ENCODE measurements at regions of chr16 and their contacts with region 1.

Region 1: GRCh38 chr16:53232826-53233529 is 178.2 kb downstream of the CHD9 start:
- DNase-seq: no peak
- H3K4me3 ChIP-seq: no peak overlapping the region
- CTCF ChIP-seq: no peak

Region 2: DNA sequence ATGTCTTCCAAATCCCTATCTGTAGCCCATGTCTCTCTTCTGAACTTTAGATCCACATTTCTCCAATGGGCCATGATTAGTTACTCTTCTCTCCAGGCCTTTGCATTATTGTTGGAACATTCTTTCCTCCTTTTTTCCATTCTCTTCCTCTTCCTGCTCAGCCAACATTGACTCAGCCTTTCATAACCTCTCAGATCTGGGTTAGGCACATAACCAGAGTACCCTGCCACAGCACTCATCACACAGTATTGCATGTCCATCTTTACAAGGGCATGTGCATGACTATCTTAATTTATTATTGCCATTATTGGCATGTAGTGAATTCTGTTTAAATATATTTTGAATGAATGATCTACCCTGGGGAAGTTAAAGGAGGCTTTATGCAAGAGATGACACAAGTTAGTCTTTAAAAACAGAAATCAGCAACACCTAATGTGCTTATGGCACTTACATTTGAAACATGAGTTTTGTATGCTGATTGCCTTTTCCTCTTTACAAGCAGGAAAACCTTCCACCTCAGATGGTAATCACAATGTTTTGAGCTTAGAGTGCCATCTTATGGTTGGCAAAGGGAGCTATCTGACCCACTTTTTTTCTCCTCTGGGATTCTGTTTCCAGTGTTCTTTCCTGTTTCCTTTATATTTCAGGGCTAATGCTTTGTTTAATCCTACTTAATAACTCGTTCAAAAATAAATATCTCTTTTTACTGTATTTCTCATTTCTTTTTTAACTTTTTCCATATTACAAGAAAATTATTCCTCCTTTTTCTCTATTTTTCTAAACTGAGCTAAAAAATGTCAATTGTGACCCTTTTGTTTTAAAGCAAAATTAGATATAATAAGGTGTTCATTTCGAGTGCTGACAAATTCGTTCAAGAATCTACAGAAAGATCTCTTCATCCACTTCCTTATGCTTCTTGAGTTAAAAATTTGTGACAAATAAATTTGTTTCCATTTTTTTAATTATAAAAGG is 50.3 kb after region 1 on chr16:
- in situ Hi-C with region 1: loop called (anchors 5 kb)
- DNase-seq: peak; percentile 18
- H3K4me3 ChIP-seq: no peak overlapping the region
- CTCF ChIP-seq: peak; percentile 61

Measured in astrocyte of the cerebellum (primary cell).